AG04449 (cell line): ENCODE measurements at regions of chr13 and their contacts with region 1.

Region 1: GRCh38 chr13:113410472-113411201 is 42.7 kb downstream of the ADPRHL1 start:
- DNase-seq: peak; percentile 42
- H3K4me3 ChIP-seq: peak overlapping the region; percentile 33
- CTCF ChIP-seq: no peak

Region 2: DNA sequence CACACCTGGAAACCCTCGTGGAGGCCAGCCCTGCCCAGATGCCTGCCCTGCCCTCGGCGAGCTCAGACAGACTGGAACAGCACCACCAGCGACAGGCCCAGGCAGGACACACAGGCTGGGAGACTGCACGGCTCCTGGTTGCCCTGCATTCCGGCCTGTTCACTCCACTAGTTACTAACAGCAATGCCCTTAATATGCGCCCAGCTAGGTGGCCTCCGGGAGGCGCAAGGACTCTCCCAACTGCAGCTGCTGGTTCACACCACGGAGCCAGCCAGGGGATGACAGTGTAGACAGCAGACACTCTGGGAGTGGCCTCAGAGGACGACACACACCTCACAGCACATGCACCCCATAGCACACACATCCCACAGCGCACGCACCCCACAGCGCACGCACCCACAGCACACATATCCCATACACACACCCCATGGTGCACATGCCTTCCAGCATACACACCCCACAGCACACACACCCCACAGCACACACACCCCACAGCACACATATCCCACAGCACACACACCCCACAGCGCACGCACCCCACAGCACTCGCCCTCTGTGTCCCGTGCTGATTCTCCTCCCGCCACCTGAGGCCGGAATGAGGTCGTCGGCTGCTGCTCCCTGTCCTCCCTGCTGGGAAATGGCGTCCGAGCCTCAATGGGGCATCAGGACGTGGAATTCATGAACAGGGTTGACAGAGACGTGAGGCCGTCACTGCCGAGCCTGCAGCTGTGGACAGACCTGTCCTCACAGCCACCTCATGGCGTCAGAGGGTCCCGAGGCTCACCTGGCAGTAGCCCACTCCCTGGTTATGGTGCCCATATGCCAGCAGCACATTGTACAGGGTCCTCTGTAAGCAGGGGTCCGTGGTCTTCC is 60.3 kb before region 1 on chr13:
- CTCF ChIA-PET with region 1: no interaction called
- POLR2A ChIA-PET with region 1: no interaction called
- DNase-seq: no peak
- H3K4me3 ChIP-seq: no peak overlapping the region
- CTCF ChIP-seq: no peak

Region 3: DNA sequence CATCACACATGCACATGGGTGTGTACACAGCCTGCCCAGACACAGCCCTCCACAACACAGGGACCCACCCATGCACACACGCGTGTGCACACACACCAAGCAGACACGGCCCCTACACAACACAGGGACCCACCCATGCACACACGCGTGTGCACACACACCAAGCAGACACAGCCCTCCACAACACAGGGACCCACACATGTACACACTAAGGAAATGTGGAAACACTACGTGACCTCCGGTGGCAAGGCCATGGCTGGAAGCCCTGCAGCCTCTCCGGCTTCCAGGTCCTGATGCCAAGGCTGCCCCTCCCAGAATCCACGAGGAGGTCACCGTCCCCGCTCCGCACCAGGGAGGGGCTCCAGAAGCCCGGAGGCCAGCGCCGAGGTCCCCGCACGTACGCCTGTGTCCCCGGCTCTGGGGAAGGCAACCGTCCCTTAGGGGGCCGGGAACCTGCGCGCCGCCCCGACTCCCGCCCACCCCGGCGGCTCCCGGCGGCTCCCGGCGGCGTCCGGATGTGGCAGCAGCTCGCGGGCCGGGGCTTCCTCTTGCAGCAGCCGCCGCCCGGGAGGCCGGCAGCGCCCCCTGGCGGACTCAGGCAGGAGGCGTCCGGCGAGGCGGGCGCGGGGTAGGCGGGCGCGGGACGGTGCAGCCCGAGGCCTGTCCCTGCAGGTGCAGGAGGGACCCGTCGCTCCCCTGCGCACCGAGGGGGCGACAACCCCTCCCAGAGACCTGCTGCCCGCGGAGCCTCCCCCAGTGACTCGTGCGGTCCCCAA is 16.9 kb before region 1 on chr13:
- CTCF ChIA-PET with region 1: interaction called, 21 read pairs
- POLR2A ChIA-PET with region 1: interaction called, 3 read pairs
- DNase-seq: no peak
- H3K4me3 ChIP-seq: peak overlapping the region; percentile 72
- CTCF ChIP-seq: peak; percentile 76